ENCODE measurements at regions of chr11 and their contacts with region 1.

Region 1: DNA sequence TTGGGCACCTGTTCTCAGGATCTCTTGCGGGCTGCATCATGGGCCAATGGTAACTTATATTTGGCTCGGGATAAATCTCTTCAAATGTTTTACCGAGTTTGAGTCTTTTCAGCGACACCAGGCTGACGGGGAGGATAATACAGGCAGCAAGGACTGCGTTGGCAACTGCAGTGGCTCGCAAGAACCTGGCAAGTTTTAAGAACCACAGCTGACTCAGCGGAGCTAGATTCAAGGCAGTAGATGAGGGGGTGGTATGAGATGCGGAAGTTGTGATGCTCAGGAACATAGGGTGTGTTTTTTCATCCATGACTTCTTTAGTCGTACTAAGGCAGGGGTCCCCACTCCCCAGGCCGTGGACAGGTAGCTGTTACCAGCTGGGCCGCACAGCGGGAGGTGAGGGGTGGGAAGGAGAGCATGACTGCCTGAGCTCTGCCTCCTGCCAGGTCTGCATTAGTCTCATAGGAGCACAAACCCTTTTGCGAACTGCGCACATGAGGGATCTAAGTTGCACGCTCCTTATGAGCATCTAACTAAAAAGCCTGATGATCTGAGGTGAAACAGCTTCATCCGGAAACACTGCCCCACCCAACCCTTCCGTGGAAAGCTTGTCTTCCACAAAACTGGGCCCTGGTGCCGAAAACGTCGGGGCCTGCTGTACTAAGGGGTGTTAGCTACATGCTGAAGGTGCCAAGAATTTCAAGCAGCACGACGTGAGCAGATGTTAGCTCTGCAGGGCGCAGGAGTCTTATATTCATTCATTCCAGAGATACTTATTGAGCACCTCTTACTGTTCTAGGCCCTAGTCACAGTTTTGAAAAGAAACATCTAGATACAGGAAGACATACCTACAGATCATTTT is 6.4 kb upstream of the JAM3 start:
- DNase-seq: no peak
- H3K4me3 ChIP-seq: no peak overlapping the region
- H3K4me3 Mint-ChIP-seq: no peak overlapping the region
- H3K27ac Mint-ChIP-seq: no peak overlapping the region
- H3K4me1 ChIP-seq: no peaks in the 10 kb centered on the region
- H3K4me1 Mint-ChIP-seq: no peaks in the 10 kb centered on the region
- H3K27me3 ChIP-seq: no peaks in the 10 kb centered on the region
- H3K27me3 Mint-ChIP-seq: peaks cover 20% of the 10 kb centered on the region
- CTCF ChIP-seq: no peak

Region 2: GRCh38 chr11:134014511-134014910 is 48.0 kb before region 1 on chr11:
- CTCF ChIA-PET with region 1: no interaction called
- POLR2A ChIA-PET with region 1: no interaction called
- intact Hi-C with region 1: no loop called
- DNase-seq: no peak
- H3K4me3 ChIP-seq: no peak overlapping the region
- H3K4me3 Mint-ChIP-seq: no peak overlapping the region
- H3K27ac Mint-ChIP-seq: no peak overlapping the region
- H3K4me1 ChIP-seq: no peaks in the 10 kb centered on the region
- H3K4me1 Mint-ChIP-seq: no peaks in the 10 kb centered on the region
- H3K27me3 ChIP-seq: peaks cover 1% of the 10 kb centered on the region; the same call in 1 of the 2 replicates
- H3K27me3 Mint-ChIP-seq: peaks cover 51% of the 10 kb centered on the region
- CTCF ChIP-seq: peak; percentile 19 to 31

Region 3: DNA sequence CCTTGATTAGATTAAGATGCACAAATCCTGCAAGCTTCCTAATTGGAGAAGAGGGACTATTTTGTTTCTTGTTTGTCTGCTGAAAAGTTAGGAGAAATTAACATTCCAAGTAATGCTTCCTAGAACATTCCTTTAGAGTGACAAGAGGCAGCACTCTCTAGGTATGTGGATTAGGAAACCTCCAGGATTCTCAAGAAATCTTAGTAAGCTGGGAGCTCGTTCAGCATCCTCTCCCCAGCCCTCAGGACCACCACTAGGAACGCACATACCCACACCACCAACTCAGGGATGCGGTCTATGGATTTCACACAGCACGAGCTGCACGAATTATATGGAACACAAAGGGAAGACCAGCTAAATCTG is 108.4 kb after region 1 on chr11:
- CTCF ChIA-PET with region 1: no interaction called
- POLR2A ChIA-PET with region 1: interaction called, 10 read pairs
- intact Hi-C with region 1: no loop called
- DNase-seq: no peak
- H3K4me3 ChIP-seq: no peak overlapping the region
- H3K4me3 Mint-ChIP-seq: no peak overlapping the region
- H3K27ac Mint-ChIP-seq: no peak overlapping the region
- H3K4me1 ChIP-seq: no peaks in the 10 kb centered on the region
- H3K4me1 Mint-ChIP-seq: no peaks in the 10 kb centered on the region
- H3K27me3 ChIP-seq: no peaks in the 10 kb centered on the region
- H3K27me3 Mint-ChIP-seq: no peaks in the 10 kb centered on the region
- CTCF ChIP-seq: no peak

Measured in Caco-2 (cell line).